Activated naive CD4-positive, alpha-beta T cell treated with anti-CD3 and anti-CD28 coated beads, Interleukin-2, amount 10 ng/mL, durations not matched to agents 7 days and 5 days (primary cell): ENCODE measurements at regions of chr16 and their contacts with region 1.

Region 1: GRCh38 chr16:8878521-8878911 is 3.6 kb upstream of the LITAFD start:
- DNase-seq: no peak
- H3K4me3 Mint-ChIP-seq: no peak overlapping the region
- H3K27ac Mint-ChIP-seq: no peak overlapping the region
- H3K4me1 Mint-ChIP-seq: peaks cover 25% of the 10 kb centered on the region
- H3K27me3 Mint-ChIP-seq: peaks cover 42% of the 10 kb centered on the region

Region 2: DNA sequence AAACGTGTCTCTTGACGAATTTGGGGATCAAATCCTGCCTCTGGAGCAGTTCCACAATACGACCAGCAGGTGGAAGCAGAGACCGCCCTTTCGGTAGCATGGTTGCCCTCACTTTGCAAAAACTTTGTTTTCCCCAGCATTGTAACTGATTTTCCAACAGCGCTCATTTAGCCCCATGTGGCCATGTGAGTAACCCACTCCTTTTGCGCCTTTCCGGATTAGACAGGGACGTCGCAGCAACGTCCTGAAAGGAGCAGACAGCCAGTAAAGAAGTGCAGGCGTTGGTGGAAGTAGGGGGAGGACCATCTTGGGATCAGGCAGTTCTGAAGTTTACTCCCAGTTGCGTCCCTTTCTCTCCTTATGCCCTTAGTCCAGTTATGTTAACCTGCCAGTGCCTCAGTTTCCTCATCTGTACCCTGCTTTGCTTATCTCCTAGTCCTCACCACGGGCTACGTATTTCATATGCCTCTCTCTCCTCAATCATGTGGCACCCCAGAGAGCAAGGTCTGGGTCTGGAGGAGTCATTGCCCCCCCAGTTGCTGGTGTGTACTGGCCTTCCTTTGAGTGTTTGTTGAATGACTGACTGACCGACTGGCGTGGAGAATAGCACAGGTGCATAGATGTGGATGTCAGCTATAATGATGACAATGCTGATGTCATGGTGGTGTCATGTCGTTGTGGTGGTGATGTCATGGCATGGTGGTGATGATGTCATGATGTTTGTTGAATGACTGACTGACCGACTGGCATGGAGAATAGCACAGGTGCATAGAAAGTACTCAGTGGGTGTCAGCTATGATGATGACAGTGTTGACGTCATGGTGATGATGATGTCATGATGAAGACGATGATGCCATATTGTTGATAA is 310.5 kb before region 1 on chr16:
- CTCF ChIA-PET with region 1: interaction called, 19 read pairs
- DNase-seq: peak; percentile 82
- H3K4me3 Mint-ChIP-seq: no peak overlapping the region
- H3K27ac Mint-ChIP-seq: peak overlapping the region; percentile 66
- H3K4me1 Mint-ChIP-seq: peaks cover 7% of the 10 kb centered on the region
- H3K27me3 Mint-ChIP-seq: peaks cover 28% of the 10 kb centered on the region

Region 3: DNA sequence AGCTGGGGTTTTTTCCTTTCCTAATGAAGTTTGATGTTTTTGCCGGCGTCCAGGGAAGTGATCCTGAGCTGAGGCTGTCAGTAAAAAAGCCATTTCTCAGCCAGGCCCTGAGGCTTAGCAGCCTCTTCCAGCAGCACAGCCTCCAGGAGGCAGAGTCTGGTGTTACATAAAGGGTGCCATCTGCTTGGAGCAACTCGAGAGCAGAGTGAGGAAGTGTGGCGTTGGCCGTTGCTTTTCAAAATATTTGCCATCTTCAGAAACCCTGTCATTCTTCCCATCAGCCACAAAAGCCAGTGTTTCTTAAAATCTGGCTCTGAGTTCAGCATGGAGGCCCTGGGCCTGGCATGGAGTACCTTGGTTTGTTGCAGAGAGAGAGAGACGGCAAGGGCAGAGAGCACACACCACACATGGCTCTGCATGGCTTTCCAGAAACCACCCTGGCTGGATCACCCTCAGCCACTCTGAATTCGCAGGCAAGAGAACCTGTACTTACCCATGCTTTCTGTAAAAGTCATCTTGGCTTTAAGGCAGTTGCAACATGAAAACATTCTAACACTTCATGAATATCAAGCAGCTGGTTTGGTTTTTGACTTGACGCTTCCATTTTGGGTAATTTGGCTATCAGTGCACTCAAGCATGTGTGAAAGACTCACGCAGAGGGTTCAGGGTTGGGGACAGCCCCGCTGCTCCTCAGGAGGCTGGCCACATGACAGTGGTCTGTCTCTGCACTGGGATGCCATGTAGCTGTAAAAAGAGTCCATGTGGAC is 59.8 kb before region 1 on chr16:
- CTCF ChIA-PET with region 1: interaction called, 11 read pairs
- DNase-seq: no peak
- H3K4me3 Mint-ChIP-seq: no peak overlapping the region
- H3K27ac Mint-ChIP-seq: no peak overlapping the region
- H3K4me1 Mint-ChIP-seq: peaks cover 27% of the 10 kb centered on the region
- H3K27me3 Mint-ChIP-seq: no peaks in the 10 kb centered on the region

Region 4: GRCh38 chr16:8855011-8855786 is 23.3 kb before region 1 on chr16:
- CTCF ChIA-PET with region 1: interaction called, 13 read pairs
- DNase-seq: peak; percentile 34
- H3K4me3 Mint-ChIP-seq: no peak overlapping the region
- H3K27ac Mint-ChIP-seq: peak overlapping the region; percentile 72
- H3K4me1 Mint-ChIP-seq: peaks cover 66% of the 10 kb centered on the region
- H3K27me3 Mint-ChIP-seq: no peaks in the 10 kb centered on the region

Region 5: DNA sequence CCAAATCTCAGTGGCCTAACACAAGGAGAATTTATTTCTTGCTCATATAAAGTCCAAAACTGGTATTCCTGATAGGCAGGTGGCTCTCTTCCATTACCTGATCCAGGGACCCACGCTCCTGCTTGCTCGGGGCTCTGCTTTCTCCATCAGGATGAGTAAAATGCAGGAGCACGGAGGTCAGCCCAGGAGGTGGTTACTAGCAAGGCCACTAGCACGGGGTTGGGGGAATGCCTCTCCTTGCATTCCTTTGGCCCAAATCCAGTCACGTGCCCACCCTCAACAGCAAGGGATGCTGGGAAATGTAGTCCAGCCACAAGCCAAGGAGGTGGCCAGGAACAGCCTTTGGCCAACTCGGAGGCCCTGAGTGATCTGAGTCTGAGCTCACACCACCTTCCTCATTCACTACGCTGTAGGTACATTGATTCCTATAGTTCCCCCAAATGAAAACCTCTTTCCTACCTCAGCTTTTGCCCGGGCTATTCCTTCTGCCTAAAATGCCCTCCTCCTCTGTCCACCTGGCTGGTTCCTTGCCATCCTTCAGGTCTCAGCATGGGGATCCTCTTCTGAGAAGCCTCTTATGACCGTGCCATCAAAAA is 174.6 kb after region 1 on chr16:
- CTCF ChIA-PET with region 1: no interaction called
- DNase-seq: no peak
- H3K4me3 Mint-ChIP-seq: no peak overlapping the region
- H3K27ac Mint-ChIP-seq: no peak overlapping the region
- H3K4me1 Mint-ChIP-seq: peaks cover 3% of the 10 kb centered on the region
- H3K27me3 Mint-ChIP-seq: peaks cover 19% of the 10 kb centered on the region